B cell (primary cell): ENCODE measurements at regions of chr16 and their contacts with region 1.

Region 1: GRCh38 chr16:75519881-75520280 is 16.0 kb downstream of the CHST5 start:
- DNase-seq: no peak
- ATAC-seq: no peak
- H3K4me3 ChIP-seq: no peak overlapping the region
- H3K4me3 Mint-ChIP-seq: no peak overlapping the region
- H3K27ac ChIP-seq: no peak overlapping the region
- H3K27ac Mint-ChIP-seq: no peak overlapping the region
- H3K4me1 ChIP-seq: peaks cover 0 to 13% of the 10 kb centered on the region in 2 donors
- H3K4me1 Mint-ChIP-seq: peaks cover 12% of the 10 kb centered on the region
- H3K27me3 ChIP-seq: no peaks in the 10 kb centered on the region
- H3K27me3 Mint-ChIP-seq: no peaks in the 10 kb centered on the region
- CTCF ChIP-seq: no peak

Region 2: DNA sequence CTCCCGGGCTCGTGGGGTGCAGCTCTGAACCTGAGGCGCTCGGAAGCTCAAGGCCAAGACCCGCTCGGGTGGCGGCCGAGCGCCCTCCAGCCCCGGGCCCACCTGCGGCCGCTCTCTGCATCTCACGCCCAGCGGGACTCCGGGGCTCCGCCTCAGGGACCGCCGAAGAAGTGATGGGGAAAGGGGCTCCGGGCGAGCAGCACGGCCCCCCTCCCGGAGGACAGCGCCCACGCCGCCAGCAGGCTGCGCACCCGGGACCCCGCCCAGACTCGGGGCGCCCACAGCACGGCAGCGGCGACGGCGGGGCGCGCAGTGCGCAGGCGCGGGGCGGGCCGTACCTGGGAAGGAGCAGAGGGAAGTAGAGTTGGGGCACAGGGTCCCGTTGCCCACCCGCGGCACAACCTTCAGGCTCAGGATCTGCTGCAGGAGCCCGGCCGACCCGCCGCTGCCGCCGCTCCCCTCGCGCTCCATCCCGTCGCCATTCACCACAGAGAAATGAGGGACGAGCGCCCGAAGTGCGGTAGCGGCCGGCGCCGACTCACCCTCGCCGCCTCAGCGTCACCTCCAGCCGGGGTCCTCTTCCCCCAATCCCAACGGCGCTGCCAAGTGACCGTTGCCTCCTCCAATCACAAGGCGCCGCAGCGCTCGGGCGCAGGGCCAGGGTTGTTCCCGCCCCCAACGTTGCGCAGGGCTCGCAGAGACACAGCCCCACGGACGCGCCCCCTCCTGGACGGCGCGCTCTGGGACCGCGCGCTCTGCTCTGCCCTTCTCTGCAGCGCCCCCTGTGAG is 55.6 kb before region 1 on chr16 and contains the start of gene TMEM170A:
- CTCF ChIA-PET with region 1: interaction called, 15 read pairs
- POLR2A ChIA-PET with region 1: no interaction called
- intact Hi-C with region 1: loop called (anchors 1 kb)
- DNase-seq: peak; percentile 99
- ATAC-seq: peak; percentile 92
- H3K4me3 ChIP-seq: peak within 1 kb of the TSS; percentile 26 to 79 (median 72)
- H3K4me3 Mint-ChIP-seq: peak within 1 kb of the TSS; percentile 96
- H3K27ac ChIP-seq: peak within 1 kb of the TSS; percentile 92 to 93
- H3K27ac Mint-ChIP-seq: peak within 1 kb of the TSS; percentile 93
- H3K4me1 ChIP-seq: peaks cover 15 to 26% of the 10 kb centered on the region in 2 donors
- H3K4me1 Mint-ChIP-seq: peaks cover 37% of the 10 kb centered on the region
- H3K27me3 ChIP-seq: no peaks in the 10 kb centered on the region
- H3K27me3 Mint-ChIP-seq: no peaks in the 10 kb centered on the region
- CTCF ChIP-seq: peak; percentile 100
- total RNA-seq, gene TMEM170A: 37.9 and 45.6 TPM in 2 replicates

Region 3: GRCh38 chr16:75486014-75486675 is 33.7 kb before region 1 on chr16:
- CTCF ChIA-PET with region 1: interaction called, 11 read pairs
- POLR2A ChIA-PET with region 1: interaction called, 4 read pairs
- intact Hi-C with region 1: no loop called
- DNase-seq: no peak
- ATAC-seq: no peak
- H3K4me3 ChIP-seq: no peak overlapping the region
- H3K4me3 Mint-ChIP-seq: peak overlapping the region; percentile 21
- H3K27ac ChIP-seq: no peak overlapping the region
- H3K27ac Mint-ChIP-seq: peak overlapping the region; percentile 68
- H3K4me1 ChIP-seq: peaks cover 0 to 3% of the 10 kb centered on the region in 2 donors
- H3K4me1 Mint-ChIP-seq: peaks cover 31% of the 10 kb centered on the region
- H3K27me3 ChIP-seq: no peaks in the 10 kb centered on the region
- H3K27me3 Mint-ChIP-seq: peaks cover 4% of the 10 kb centered on the region
- CTCF ChIP-seq: no peak

Region 4: GRCh38 chr16:75555707-75556430 is 36.0 kb after region 1 on chr16 and contains the start of gene TMEM231:
- CTCF ChIA-PET with region 1: interaction called, 4 read pairs
- POLR2A ChIA-PET with region 1: interaction called, 5 read pairs
- intact Hi-C with region 1: loop called (anchors 1 kb)
- DNase-seq: peak; percentile 96
- ATAC-seq: peak; percentile 93
- H3K4me3 ChIP-seq: peak within 1 kb of the TSS; percentile 34 to 78 (median 71)
- H3K4me3 Mint-ChIP-seq: peak within 1 kb of the TSS; percentile 97
- H3K27ac ChIP-seq: peak within 1 kb of the TSS; percentile 9 to 76
- H3K27ac Mint-ChIP-seq: peak within 1 kb of the TSS; percentile 88
- H3K4me1 ChIP-seq: peaks cover 9 to 16% of the 10 kb centered on the region in 2 donors
- H3K4me1 Mint-ChIP-seq: peaks cover 10% of the 10 kb centered on the region
- H3K27me3 ChIP-seq: peaks cover 0 to 8% (median 0%) of the 10 kb centered on the region in 4 experiments
- H3K27me3 Mint-ChIP-seq: no peaks in the 10 kb centered on the region
- CTCF ChIP-seq: peak; percentile 17
- total RNA-seq, gene TMEM231: 4.7 and 6.0 TPM in 2 replicates

Region 5: GRCh38 chr16:75622761-75623605 is 103.1 kb after region 1 on chr16 and contains the start of gene ADAT1:
- CTCF ChIA-PET with region 1: interaction called, 8 read pairs
- POLR2A ChIA-PET with region 1: interaction called, 5 read pairs
- intact Hi-C with region 1: loop called (anchors 1 kb)
- DNase-seq: peak; percentile 98
- ATAC-seq: peak; percentile 94
- H3K4me3 ChIP-seq: peak within 1 kb of the TSS; percentile 68 to 85 (median 80)
- H3K4me3 Mint-ChIP-seq: peak within 1 kb of the TSS; percentile 96
- H3K27ac ChIP-seq: peak within 1 kb of the TSS; percentile 87 to 91
- H3K27ac Mint-ChIP-seq: peak within 1 kb of the TSS; percentile 98
- H3K4me1 ChIP-seq: peaks cover 12 to 27% of the 10 kb centered on the region in 2 donors
- H3K4me1 Mint-ChIP-seq: peaks cover 27% of the 10 kb centered on the region
- H3K27me3 ChIP-seq: no peaks in the 10 kb centered on the region
- H3K27me3 Mint-ChIP-seq: no peaks in the 10 kb centered on the region
- CTCF ChIP-seq: no peak
- total RNA-seq, gene ADAT1: 71.2 and 75.2 TPM in 2 replicates